Activated CD8-positive, alpha-beta memory T cell treated with anti-CD3 and anti-CD28 coated beads, Interleukin-2, amount 10 ng/mL, durations not matched to agents 7 days and 5 days (primary cell): ENCODE measurements at regions of chr20 and their contacts with region 1.

Region 1: GRCh38 chr20:49610701-49611538 is 43.0 kb upstream of the PTGIS start:
- DNase-seq: peak; percentile 87
- ATAC-seq: peak; percentile 73
- H3K4me3 Mint-ChIP-seq: peak overlapping the region; percentile 55
- H3K27ac Mint-ChIP-seq: peak overlapping the region; percentile 63
- H3K4me1 Mint-ChIP-seq: peaks cover 26% of the 10 kb centered on the region
- H3K27me3 Mint-ChIP-seq: no peaks in the 10 kb centered on the region

Region 2: GRCh38 chr20:49541733-49542513 is 69.0 kb before region 1 on chr20:
- CTCF ChIA-PET with region 1: interaction called, 559 read pairs
- DNase-seq: peak; percentile 87
- ATAC-seq: peak; percentile 88
- H3K4me3 Mint-ChIP-seq: no peak overlapping the region
- H3K27ac Mint-ChIP-seq: peak overlapping the region; percentile 89
- H3K4me1 Mint-ChIP-seq: peaks cover 19% of the 10 kb centered on the region
- H3K27me3 Mint-ChIP-seq: no peaks in the 10 kb centered on the region

Region 3: DNA sequence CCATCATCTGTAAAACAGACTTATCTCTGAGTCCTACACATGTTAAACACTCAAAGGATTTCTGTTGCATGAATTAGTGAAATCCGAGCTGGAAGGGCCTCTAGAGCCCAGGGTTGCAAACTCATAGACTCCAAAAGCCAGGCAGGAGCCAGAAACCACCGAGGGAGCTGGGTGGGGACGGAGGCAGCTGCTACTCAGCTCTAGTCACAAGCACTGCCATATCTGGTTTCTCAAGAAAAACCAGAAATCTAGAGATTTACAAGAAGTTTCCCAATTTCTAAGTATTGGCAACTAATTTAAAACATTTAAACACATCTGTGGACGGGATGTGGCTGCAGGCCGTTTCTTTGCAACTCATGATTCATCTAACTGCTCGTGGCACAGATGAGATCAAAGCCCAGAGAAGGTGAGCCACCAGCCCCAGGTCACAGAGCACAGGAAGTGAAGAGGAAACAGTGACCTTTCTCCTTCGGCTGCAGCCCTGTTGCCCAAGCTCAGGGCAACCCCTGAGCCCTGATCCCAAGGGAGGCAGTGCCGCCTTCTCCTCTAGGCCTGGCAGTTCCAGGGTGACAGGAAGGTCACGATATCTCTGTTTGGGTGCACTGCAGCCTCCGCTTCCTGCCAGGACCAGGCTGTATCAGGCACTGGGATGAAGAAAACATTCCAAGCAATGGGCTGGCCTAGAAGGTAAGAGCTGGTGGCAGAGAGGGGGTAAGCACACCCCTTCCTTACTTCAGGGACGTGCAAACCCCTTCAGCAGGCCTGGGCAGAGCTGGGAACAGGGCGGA is 16.6 kb before region 1 on chr20:
- CTCF ChIA-PET with region 1: interaction called, 90 read pairs
- DNase-seq: peak; percentile 96
- ATAC-seq: peak; percentile 66
- H3K4me3 Mint-ChIP-seq: peak overlapping the region; percentile 94
- H3K27ac Mint-ChIP-seq: peak overlapping the region; percentile 99
- H3K4me1 Mint-ChIP-seq: peaks cover 88% of the 10 kb centered on the region
- H3K27me3 Mint-ChIP-seq: no peaks in the 10 kb centered on the region

Region 4: GRCh38 chr20:49797344-49797615 is 186.4 kb after region 1 on chr20:
- CTCF ChIA-PET with region 1: interaction called, 10 read pairs
- DNase-seq: no peak
- ATAC-seq: no peak
- H3K4me3 Mint-ChIP-seq: no peak overlapping the region
- H3K27ac Mint-ChIP-seq: no peak overlapping the region
- H3K4me1 Mint-ChIP-seq: peaks cover 36% of the 10 kb centered on the region
- H3K27me3 Mint-ChIP-seq: peaks cover 5% of the 10 kb centered on the region

Region 5: DNA sequence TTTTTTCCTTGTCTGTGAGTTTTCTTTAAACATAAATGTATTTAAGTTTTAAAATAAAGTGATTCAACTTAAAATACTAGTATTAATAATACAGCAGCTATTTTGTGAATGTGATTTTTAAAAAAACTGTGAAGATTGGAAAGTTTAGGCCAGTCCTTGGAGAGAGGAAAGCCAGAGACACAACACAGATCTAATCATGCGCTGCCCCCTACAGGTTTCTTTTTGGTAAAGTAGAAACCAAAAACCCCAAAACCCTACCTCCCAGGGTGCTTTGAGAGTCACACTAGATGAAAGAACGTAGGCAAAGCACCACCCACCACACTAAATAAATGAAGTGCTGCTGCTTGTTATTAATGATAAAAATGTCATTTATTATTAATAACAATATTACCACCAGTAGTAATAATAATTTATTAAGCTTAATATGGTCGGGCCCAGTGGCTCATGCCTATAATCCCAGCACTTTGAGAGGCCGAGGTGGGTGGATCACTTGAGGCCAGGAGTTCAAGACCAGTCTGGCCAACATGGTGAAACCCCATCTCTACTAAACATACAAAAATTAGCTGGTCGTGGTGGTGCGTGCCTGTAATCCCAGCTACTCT is 235.4 kb after region 1 on chr20:
- CTCF ChIA-PET with region 1: interaction called, 76 read pairs
- DNase-seq: peak; percentile 64
- ATAC-seq: peak; percentile 80
- H3K4me3 Mint-ChIP-seq: no peak overlapping the region
- H3K27ac Mint-ChIP-seq: no peak overlapping the region
- H3K4me1 Mint-ChIP-seq: peaks cover 8% of the 10 kb centered on the region
- H3K27me3 Mint-ChIP-seq: no peaks in the 10 kb centered on the region

Region 6: DNA sequence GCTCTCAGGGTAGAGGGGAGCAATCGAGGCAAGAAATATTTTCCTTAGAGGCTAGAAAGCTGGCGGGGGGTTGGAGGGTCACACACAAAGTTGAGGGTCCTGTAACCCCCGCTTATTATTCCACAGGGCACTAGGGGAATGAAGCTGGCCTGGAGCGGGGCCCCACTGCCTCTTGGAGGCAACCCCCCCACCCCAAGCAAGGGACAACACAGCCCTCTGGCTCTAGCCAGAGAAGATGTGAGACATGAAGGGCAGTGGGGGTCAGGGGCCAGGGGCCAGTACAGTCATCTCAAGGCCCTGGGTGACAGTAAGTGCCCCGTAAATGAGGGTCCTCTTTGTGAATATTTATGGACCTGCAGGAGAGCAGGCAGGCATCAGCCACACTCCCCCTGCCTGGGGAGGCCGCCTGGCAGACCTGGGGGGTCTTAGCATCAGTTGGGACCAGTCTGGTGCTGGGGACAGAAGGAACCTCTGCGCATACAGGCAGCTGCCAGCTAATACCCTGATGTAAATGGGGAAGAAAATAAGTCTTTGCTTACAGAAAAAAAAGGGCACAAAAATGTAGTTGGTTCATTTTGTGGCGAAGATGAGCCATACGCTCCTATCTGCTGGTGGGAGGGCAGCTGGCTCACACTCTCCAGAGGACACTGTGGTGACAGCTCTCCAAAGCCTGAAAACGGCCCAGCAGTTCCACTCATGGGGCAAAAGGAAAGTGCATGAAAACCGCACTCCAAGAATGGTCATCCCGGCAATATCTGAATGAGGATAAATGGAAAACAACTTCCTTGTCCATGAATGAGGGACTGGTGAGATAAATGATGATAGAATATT is 282.5 kb after region 1 on chr20:
- CTCF ChIA-PET with region 1: interaction called, 30 read pairs
- DNase-seq: peak; percentile 69
- ATAC-seq: peak; percentile 73
- H3K4me3 Mint-ChIP-seq: peak overlapping the region; percentile 63
- H3K27ac Mint-ChIP-seq: peak overlapping the region; percentile 93
- H3K4me1 Mint-ChIP-seq: peaks cover 50% of the 10 kb centered on the region
- H3K27me3 Mint-ChIP-seq: no peaks in the 10 kb centered on the region